Adrenal gland (tissue), 19 donors: ENCODE measurements at regions of chr2 and their contacts with region 1.

Region 1: DNA sequence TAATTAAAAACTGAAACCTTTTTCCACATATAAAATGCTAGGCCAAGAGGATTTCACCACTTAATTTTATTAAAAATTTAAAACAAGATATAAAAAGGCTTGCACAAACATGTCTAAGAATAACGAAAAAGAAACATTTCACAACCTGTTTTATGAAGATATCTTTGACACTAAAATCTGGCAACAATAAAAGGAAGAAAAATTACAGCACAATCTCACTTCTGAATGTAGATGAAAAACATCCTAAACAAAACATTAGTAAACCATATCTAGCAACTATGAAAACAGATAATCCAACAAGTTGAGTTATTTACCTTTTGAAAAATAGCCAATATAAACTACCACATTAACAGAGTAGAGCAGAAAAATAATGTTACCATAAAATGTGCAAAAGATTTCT is 185.4 kb upstream of the MMADHC start:
- DNase-seq: no peak
- H3K4me3 ChIP-seq: no peak overlapping the region
- H3K27ac ChIP-seq: no peak overlapping the region
- H3K4me1 ChIP-seq: no peaks in the 10 kb centered on the region
- H3K27me3 ChIP-seq: no peaks in the 10 kb centered on the region
- CTCF ChIP-seq: no peak
- POLR2A ChIP-seq: no peak

Region 2: DNA sequence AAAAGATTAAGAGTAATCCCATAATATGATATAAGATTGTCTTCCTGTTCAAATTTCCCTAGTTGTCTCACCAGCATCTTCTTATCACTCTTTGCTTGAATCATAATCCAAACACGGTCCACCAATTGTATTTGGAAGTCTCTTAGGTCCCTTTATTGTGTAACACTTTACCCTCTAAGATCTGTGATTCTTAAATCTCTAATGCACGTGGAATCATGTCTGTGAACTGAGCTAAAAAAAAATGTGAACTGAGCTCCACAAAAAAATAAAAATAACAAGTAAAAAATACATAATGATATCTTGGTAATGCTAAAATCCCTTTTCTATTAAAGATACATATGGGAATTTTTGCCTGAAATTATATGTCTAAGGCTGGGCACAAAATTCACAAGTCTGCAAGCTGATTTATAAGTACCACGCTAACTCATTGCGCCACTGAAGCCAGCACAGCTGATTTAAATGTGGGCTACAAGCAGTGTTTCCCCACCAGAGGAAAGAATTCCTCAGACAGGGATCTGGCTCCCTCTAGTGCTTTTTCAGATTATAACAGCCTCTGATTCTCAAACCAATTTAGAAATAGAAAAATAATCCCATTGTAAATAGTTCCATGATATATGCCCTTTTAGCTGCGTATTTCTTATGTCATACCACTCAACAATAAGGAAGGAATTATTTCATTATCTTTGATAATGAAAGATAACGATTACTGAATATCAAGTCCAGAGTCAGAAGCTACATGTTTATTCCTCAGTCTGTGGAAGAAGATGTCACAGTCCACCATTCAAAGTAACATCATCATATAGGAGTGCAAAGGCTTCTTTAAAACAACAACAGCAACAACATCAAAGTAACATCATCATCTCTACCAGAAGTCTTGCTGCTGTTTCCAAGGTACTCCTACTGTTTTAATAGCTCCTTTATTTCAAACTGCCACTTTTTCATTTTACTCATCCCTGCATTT is 1465.8 kb after region 1 on chr2:
- intact Hi-C with region 1: loop called in 1 of 2 experiments (anchors 10 kb)
- DNase-seq: peak; percentile 47 to 84 (median 74)
- H3K4me3 ChIP-seq: no peak overlapping the region
- H3K27ac ChIP-seq: peak overlapping the region in 1 of 5 donors; percentile 28
- H3K4me1 ChIP-seq: peaks cover 4 to 12% of the 10 kb centered on the region in 2 donors
- H3K27me3 ChIP-seq: no peaks in the 10 kb centered on the region
- CTCF ChIP-seq: peak; percentile 77 to 96 (median 93)
- POLR2A ChIP-seq: no peak